ENCODE measurements at regions of chr15 and their contacts with region 1.

Region 1: DNA sequence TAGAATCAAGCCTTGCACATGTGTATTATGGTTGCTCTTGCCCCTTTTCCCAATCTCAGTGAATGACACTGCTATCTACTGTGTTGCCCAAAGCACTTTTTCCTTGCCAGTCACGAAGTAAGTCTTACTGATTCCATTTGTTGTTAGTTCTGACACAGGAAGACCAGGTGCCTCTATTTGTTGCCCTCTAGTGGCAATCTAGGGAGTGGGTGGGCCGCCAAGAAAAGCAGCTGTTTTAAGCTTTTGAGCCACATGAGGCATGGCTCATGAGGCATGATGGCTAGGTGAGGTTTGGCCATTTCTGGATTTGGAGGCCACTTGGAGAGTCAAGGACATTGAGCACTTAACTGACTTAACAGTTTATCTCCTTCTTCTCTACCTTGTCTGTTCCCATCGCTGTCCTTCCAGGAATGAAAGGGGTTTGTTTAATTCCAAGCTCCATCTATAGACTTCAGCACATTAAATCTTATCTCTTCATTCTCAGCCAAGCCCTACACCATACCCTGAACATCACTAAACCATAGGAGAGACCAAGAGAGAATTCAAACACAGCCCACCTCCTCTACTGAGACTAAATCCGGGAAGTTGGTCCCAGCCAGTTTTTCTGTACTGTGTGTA is 103.1 kb downstream of the HCN4 start:
- DNase-seq: peak; percentile 6
- H3K4me3 ChIP-seq: no peak overlapping the region
- H3K27ac ChIP-seq: no peak overlapping the region
- H3K27me3 ChIP-seq: no peaks in the 10 kb centered on the region
- CTCF ChIP-seq: peak; percentile 76

Region 2: GRCh38 chr15:73225358-73226015 is 40.2 kb before region 1 on chr15:
- CTCF ChIA-PET with region 1: no interaction called
- POLR2A ChIA-PET with region 1: no interaction called
- DNase-seq: no peak
- H3K4me3 ChIP-seq: no peak overlapping the region
- H3K27ac ChIP-seq: no peak overlapping the region
- H3K27me3 ChIP-seq: no peaks in the 10 kb centered on the region
- CTCF ChIP-seq: no peak

Region 3: DNA sequence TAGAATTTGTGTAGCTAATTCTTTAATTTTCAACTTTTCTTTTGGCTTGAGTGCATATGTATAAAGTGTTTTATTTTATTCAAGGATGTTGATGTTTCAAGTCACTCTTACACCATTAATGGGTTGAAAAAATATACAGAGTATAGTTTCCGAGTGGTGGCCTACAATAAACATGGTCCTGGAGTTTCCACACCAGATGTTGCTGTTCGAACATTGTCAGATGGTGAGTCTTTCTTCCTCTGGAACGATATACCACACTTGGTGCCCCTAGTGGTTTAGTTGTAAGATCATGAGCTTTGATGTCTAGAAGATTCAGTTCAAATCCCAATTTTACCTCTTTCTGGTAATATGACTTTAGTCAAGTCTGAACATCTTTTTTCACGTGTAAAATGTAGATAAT is 16.1 kb before region 1 on chr15:
- CTCF ChIA-PET with region 1: interaction called, 161 read pairs
- POLR2A ChIA-PET with region 1: no interaction called
- DNase-seq: no peak
- H3K4me3 ChIP-seq: no peak overlapping the region
- H3K27ac ChIP-seq: no peak overlapping the region
- H3K27me3 ChIP-seq: no peaks in the 10 kb centered on the region
- CTCF ChIP-seq: no peak

Measured in AG04450 (cell line).